H1 (cell line): ENCODE measurements at regions of chr17 and their contacts with region 1.

Region 1: DNA sequence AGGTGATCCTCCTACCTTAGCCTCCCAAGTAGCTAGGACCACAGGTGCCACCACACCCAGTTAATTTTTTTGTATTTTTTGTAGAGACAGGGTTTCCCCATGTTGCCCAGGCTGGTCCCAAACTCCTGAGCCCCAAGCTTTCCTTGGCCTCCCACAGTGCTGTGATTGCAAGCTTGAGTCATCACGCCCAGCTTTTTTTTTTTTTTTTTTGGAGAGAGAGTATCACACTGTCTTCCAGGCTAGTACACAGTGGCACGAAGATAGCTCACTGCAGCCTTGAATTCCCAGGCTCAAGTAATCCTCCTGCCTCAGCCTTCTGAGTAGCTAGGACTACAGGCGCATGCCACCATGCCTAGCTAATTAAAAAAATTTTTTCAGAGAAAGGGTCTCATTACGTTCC is 27.2 kb downstream of the HEATR9 start:
- DNase-seq: no peak
- H3K4me3 ChIP-seq: no peak overlapping the region
- H3K27ac ChIP-seq: no peak overlapping the region
- H3K4me1 ChIP-seq: no peaks in the 10 kb centered on the region
- H3K27me3 ChIP-seq: no peaks in the 10 kb centered on the region; a peak in 1 of 7 replicates
- CTCF ChIP-seq: no peak
- EP300 ChIP-seq: no peak
- POLR2A ChIP-seq: no peak
- RAD21 ChIP-seq: no peak

Region 2: DNA sequence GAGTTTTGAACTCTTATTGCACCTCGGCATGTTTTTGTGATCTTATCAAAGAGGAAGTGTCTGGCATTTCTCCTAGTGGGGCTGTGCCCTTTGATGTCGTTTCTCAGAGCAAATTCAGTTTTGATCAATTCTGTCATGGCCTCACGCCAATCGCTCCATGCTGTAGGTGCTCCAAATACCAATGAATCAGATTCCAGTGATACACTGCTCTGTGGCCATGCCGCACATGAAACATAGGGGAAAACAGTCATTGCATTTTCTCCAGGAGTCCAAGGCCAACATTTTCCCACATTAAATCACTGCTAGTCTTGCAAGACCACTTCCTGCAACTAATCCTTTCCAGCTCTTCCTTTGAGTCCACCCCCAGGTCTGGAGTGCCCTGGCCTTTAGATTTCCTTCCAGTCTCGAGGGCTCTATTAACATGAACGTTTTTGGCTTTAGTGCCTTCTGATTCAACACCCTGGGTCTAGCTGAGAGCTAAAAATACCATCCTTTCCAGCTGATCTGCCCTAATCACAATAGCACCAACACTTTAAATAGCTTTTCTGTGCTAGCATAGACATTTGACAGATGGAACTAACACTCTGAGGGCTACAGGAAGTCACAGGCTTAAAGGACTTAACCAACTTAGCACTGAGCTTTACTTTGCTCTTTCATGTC is 128.3 kb before region 1 on chr17:
- CTCF ChIA-PET with region 1: no interaction called
- POLR2A ChIA-PET with region 1: no interaction called
- DNase-seq: no peak
- H3K4me3 ChIP-seq: no peak overlapping the region
- H3K27ac ChIP-seq: no peak overlapping the region
- H3K4me1 ChIP-seq: no peaks in the 10 kb centered on the region
- H3K27me3 ChIP-seq: no peaks in the 10 kb centered on the region
- CTCF ChIP-seq: no peak
- EP300 ChIP-seq: no peak
- POLR2A ChIP-seq: no peak
- RAD21 ChIP-seq: no peak

Region 3: DNA sequence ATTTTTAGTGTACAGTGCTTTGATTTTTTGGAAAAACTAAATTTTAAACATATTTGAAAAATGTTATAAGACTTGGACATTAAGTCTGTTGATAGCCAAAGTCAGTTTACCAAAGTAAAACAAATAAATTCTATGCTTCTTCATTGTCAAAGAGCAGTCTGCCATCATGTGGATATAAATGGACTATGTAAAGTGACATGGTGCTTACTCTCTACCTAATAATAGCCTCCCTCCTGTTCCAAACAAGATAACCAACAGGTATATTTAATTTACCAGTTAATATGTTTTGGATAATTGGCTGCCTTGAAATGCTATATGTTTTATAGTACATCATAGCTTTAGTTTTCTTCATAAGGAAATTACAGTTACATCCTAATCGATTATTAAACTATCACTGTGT is 16.3 kb before region 1 on chr17:
- CTCF ChIA-PET with region 1: interaction called, 8 read pairs
- POLR2A ChIA-PET with region 1: interaction called, 24 read pairs
- DNase-seq: no peak
- H3K4me3 ChIP-seq: no peak overlapping the region
- H3K27ac ChIP-seq: no peak overlapping the region
- H3K4me1 ChIP-seq: no peaks in the 10 kb centered on the region
- H3K27me3 ChIP-seq: no peaks in the 10 kb centered on the region
- CTCF ChIP-seq: no peak
- EP300 ChIP-seq: no peak
- POLR2A ChIP-seq: no peak
- RAD21 ChIP-seq: no peak

Region 4: GRCh38 chr17:35947156-35947585 is 105.7 kb after region 1 on chr17:
- CTCF ChIA-PET with region 1: no interaction called
- POLR2A ChIA-PET with region 1: no interaction called
- DNase-seq: peak in 1 of 2 experiments; percentile 72
- H3K4me3 ChIP-seq: no peak overlapping the region
- H3K27ac ChIP-seq: no peak overlapping the region
- H3K4me1 ChIP-seq: no peaks in the 10 kb centered on the region
- H3K27me3 ChIP-seq: no peaks in the 10 kb centered on the region
- CTCF ChIP-seq: peak; percentile 77 to 87 (median 79)
- EP300 ChIP-seq: no peak; a peak in 1 of 3 replicates
- POLR2A ChIP-seq: no peak
- RAD21 ChIP-seq: peak; percentile 86